Activated CD4-positive, alpha-beta T cell treated with anti-CD3 and anti-CD28 coated beads, Interleukin-2, amount 10 ng/mL, durations not matched to agents 7 days and 5 days (primary cell): ENCODE measurements at regions of chr7 and their contacts with region 1.

Region 1: DNA sequence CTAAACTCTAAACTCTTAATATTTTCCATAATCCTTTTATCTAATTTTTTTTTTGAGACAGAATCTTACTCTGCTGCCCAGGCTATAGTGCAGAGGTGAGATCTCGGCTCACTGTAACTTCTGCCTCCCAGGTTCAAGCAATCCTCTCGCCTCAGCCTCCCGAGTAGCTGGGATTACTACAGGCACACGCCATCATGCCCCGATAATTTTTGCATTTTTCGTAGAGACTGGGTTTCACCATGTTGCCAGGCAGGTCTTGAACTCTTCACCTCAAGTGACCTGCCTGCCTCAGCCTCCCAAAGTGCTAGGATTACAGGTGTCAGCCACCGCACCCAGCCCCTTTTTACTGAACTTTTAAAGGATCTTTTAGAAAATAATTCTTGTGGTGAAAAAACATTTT is 110.2 kb upstream of the PHF14 start:
- DNase-seq: no peak
- H3K4me3 Mint-ChIP-seq: no peak overlapping the region
- H3K27ac Mint-ChIP-seq: no peak overlapping the region
- H3K4me1 Mint-ChIP-seq: no peaks in the 10 kb centered on the region
- H3K27me3 Mint-ChIP-seq: peaks cover 3% of the 10 kb centered on the region

Region 2: DNA sequence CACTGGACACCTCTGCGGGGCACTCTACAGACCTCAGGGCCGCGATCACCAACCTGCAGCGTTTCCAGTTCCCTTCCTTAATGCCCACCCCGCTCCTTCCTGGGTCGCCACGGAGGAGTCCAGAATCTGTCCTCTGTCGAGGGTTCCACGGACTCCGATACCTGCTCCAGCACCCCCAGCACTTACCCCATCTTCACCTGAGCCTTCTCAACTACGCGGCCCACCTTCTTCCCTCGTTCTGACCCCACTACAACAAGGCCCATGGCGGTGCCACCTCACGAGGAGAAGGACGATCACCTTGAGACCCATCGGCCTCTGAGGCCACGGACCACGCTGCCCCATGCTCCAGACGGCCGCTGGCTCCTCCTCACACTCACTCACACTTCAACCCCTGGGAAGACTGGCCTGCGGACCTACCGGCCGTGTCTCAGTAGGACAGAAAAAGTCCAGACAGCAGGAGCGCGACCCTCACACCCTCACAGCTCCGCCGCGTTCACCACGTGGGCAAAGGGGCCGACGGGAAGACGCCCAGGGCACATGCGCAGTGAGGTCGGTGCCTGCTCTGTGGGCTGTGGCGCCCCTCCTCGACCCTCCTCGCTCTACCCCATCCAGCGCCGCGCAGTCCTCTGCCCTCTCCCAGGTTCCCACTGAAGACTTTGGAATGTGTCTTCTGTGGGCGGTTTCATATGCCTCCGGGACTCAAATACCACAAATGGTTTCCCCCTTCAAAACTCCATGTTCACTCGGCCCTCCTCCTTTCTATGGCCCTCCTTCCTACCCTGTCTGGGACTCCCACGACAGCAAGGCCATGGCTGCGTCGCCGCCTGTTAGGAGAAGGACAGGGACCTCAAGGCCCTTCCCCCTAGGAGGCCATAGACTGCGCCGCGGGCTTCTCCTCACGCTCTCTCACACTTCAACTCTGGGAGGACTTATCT is 83.7 kb before region 1 on chr7:
- CTCF ChIA-PET with region 1: no interaction called
- POLR2A ChIA-PET with region 1: no interaction called
- DNase-seq: no peak
- H3K4me3 Mint-ChIP-seq: no peak overlapping the region
- H3K27ac Mint-ChIP-seq: no peak overlapping the region
- H3K4me1 Mint-ChIP-seq: no peaks in the 10 kb centered on the region
- H3K27me3 Mint-ChIP-seq: no peaks in the 10 kb centered on the region

Region 3: DNA sequence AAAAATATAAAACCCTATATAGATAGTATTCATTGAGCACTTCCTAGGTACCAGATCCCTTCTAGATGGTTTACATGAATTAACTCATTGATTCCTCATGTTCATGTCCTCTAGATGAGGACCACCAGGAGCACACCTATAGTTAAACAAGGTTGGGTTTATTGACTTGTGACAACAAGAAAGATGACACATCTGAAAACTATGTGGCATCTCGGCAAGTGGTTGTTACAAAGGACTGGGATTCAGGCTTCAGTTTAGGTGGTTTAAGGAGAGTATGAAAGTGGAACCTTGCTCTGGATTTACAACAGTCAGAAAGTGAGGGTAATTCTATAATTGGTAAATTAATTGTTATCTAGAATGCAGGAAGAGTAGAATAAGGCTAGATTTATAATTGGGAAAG is 11.2 kb after region 1 on chr7:
- CTCF ChIA-PET with region 1: interaction called, 10 read pairs
- POLR2A ChIA-PET with region 1: no interaction called
- DNase-seq: no peak
- H3K4me3 Mint-ChIP-seq: no peak overlapping the region
- H3K27ac Mint-ChIP-seq: no peak overlapping the region
- H3K4me1 Mint-ChIP-seq: no peaks in the 10 kb centered on the region
- H3K27me3 Mint-ChIP-seq: peaks cover 6% of the 10 kb centered on the region

Region 4: GRCh38 chr7:10924366-10924765 is 60.9 kb after region 1 on chr7:
- CTCF ChIA-PET with region 1: no interaction called
- POLR2A ChIA-PET with region 1: no interaction called
- DNase-seq: no peak
- H3K4me3 Mint-ChIP-seq: no peak overlapping the region
- H3K27ac Mint-ChIP-seq: no peak overlapping the region
- H3K4me1 Mint-ChIP-seq: no peaks in the 10 kb centered on the region
- H3K27me3 Mint-ChIP-seq: no peaks in the 10 kb centered on the region